Heart right ventricle (tissue), 16 donors: ENCODE measurements at regions of chr17 and their contacts with region 1.

Region 1: GRCh38 chr17:50177983-50178834 is 12.4 kb downstream of the SGCA start:
- DNase-seq: peak; percentile 82 to 89
- ATAC-seq: peak; percentile 78 to 91 (median 84)
- H3K4me3 ChIP-seq: peak overlapping the region in 6 of 10 donors; percentile 12 to 32 (median 27)
- H3K27ac ChIP-seq: peak overlapping the region; percentile 59 to 94 (median 84)
- H3K4me1 ChIP-seq: peaks cover 21 to 53% (median 38%) of the 10 kb centered on the region in 9 donors
- H3K27me3 ChIP-seq: no peaks in the 10 kb centered on the region
- CTCF ChIP-seq: peak; percentile 27 to 76 (median 51)

Region 2: DNA sequence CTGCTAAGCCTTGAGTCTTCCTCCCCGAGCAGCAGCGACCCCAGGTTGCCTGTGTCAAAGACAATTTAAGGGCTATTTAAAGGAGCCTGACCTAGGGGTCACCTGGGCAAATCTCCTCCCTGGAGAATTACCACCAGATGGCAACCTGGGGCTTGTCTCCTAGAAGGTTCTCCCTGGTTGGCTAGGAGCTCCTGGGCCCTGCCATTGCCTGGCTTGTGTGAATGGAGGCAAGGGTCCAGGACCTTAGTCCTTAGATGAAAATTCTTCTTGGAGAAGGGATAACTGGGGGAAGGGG is 279.1 kb before region 1 on chr17:
- intact Hi-C with region 1: no loop called
- DNase-seq: no peak
- ATAC-seq: no peak
- H3K4me3 ChIP-seq: no peak overlapping the region
- H3K27ac ChIP-seq: no peak overlapping the region
- H3K4me1 ChIP-seq: peaks cover 0 to 6% (median 2%) of the 10 kb centered on the region in 9 donors
- H3K27me3 ChIP-seq: peaks cover 0 to 77% (median 57%) of the 10 kb centered on the region in 7 donors
- CTCF ChIP-seq: peak in 1 of 9 donors; percentile 9

Region 3: DNA sequence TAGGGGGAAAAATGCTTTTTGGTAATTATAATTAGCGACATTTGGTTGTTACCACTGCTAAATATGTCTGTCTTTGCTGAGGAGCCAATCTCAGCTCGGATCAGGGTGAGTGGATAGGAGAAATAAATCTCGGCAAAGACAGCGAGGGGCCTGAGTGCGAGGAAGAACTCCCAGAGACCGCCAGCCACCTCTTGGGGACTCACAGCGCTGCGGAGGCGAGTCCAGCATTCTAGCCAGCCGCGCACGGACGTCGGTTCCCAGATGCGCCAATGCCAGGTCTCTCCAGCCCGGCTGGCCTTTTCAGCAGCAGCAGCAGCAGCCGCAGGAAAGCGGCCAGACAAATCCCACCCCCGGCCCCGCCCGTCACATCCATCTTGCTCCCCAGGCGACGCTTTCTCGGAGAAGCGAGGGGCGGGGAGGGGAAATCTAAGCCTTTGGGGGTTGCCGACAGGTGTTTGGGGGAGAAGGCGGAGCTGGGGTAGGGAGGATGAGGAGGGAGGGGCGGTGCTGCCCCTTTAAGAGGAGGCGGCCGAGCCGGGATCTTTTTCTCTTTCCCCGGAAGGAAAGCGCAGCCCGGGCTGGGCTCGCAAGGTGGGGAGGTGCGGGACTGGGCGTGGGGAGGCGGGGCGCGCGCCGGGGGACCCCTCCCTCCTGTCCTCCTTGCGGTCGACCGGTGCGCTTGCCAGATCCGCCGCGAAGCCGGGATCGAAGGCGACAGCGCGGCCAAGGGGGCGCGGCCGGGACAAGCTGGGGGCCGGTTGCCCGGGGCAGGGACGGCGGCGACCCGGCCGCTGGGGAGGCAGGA is 122.6 kb before region 1 on chr17 and contains the start of gene ITGA3:
- intact Hi-C with region 1: loop called in 1 of 10 experiments (anchors 1 kb)
- DNase-seq: peak; percentile 75 to 78
- ATAC-seq: peak; percentile 56 to 77 (median 72)
- H3K4me3 ChIP-seq: peak within 1 kb of the TSS; percentile 61 to 97 (median 80)
- H3K27ac ChIP-seq: peak within 1 kb of the TSS; percentile 57 to 97 (median 90)
- H3K4me1 ChIP-seq: peaks cover 27 to 85% (median 71%) of the 10 kb centered on the region in 9 donors
- H3K27me3 ChIP-seq: peaks cover 0 to 38% (median 0%) of the 10 kb centered on the region in 7 donors
- CTCF ChIP-seq: peak in 1 of 9 donors; percentile 2
- total RNA-seq, gene ITGA3: 12.5 to 44.2 (median 22.5) TPM

Region 4: DNA sequence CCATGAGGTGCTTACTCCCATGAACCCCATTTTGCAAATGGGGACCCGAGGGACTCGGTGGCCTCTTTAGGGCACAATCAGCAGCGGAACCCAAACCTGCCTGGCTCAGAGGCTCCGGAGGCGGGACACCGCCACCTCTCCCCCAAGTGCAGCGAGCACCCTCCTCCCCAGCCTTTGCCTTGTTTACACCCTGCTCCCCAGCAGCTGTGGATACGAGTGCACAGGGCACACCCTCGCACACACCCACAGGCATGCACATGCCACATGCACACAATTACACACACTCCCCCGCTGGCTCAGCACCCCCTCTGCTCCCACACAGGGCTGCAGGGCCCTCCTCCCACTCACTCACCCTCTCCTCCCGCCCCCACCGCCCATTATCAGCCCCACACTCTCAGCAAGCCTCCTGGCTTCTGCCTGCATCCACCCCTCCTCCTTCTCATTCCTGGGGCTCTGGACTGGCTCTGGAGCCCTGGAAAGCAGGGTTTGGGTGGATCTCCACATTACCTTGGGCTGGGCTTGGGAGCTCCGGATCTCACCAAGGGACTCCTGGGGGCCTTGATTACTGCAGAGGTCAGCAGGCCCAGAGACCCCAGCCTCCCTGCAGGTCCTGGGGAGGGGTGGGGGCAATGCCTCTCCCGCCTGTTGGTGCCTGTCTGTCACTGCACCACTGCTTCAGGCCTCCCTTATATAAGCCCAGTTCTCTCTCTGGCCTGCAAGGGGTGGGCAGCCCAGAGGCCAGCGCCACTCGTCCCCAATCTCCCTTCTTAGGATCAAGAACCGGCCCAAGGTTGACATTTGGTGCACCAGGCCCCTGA is 76.7 kb before region 1 on chr17:
- intact Hi-C with region 1: loop called in 1 of 10 experiments (anchors 5 kb)
- DNase-seq: peak; percentile 49 to 70
- ATAC-seq: peak; percentile 41 to 88 (median 73)
- H3K4me3 ChIP-seq: peak overlapping the region in 5 of 10 donors; percentile 5 to 29 (median 14)
- H3K27ac ChIP-seq: peak overlapping the region; percentile 74 to 97 (median 90)
- H3K4me1 ChIP-seq: peaks cover 19 to 74% (median 51%) of the 10 kb centered on the region in 9 donors
- H3K27me3 ChIP-seq: no peaks in the 10 kb centered on the region
- CTCF ChIP-seq: peak in 2 of 9 donors; percentile 2 to 12

Region 5: GRCh38 chr17:50129728-50130558 is 48.3 kb before region 1 on chr17 and contains the start of gene SAMD14:
- intact Hi-C with region 1: loop called in 2 of 10 experiments (anchors 5 kb)
- DNase-seq: peak in 1 of 2 donors; percentile 49
- ATAC-seq: peak in 6 of 8 donors; percentile 4 to 47 (median 28)
- H3K4me3 ChIP-seq: peak within 1 kb of the TSS; percentile 33 to 58 (median 55)
- H3K27ac ChIP-seq: peak within 1 kb of the TSS in 5 of 10 donors; percentile 17 to 52 (median 34)
- H3K4me1 ChIP-seq: peaks cover 14 to 70% (median 46%) of the 10 kb centered on the region in 9 donors
- H3K27me3 ChIP-seq: peaks cover 0 to 40% (median 0%) of the 10 kb centered on the region in 7 donors
- CTCF ChIP-seq: no peak
- total RNA-seq, gene SAMD14: 1.5 to 3.8 (median 1.9) TPM

Region 6: DNA sequence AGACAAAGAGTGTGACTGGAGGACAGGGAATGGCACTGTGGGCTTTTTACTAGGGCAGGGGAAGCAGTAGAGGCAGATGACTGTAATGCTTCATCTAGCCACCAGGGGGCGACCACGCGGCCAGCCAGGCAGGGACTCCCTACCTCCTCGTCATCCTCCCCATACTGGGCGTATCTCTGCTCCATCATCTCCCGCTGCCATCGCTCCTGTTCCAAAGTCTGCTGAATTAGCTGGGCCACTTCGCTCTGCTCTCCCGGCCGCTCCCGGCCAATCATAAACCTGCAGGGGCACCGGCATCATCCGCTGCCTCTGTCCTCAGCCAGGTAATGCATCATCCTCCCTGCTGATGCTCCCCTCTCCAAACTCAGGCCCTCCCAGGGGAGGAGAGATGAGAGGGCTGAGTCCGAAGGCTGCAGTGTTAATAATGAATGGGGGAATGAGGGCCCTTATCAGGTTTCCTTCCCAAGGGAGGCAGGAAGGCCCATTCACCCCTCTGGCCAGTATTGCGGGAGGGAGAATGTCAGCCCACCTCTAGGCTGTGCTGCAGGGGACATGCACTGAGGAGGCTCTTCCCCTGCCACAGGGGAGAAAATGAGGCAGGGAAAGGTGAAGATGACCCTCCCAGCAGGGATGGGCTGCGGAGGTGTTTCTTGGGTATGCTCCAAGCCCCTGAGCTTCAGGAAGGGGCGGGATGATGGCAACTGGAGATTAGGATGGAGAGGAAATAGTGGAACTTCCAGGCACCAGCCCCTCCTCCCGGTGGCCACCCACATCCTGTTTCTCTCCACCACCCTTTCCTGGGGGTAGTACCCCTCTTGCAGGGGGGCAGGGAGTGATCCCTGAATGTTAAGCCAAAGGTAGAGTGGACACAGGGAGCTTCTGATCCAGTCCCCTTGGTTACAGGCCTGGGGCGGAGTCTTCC is 38.0 kb before region 1 on chr17:
- intact Hi-C with region 1: loop called in 2 of 10 experiments (anchors 5 kb)
- DNase-seq: peak; percentile 81 to 82
- ATAC-seq: peak; percentile 71 to 87 (median 78)
- H3K4me3 ChIP-seq: peak overlapping the region in 3 of 10 donors; percentile 10 to 19 (median 11)
- H3K27ac ChIP-seq: peak overlapping the region; percentile 29 to 83 (median 72)
- H3K4me1 ChIP-seq: peaks cover 14 to 61% (median 43%) of the 10 kb centered on the region in 9 donors
- H3K27me3 ChIP-seq: no peaks in the 10 kb centered on the region
- CTCF ChIP-seq: peak; percentile 92 to 99 (median 97)

Region 7: DNA sequence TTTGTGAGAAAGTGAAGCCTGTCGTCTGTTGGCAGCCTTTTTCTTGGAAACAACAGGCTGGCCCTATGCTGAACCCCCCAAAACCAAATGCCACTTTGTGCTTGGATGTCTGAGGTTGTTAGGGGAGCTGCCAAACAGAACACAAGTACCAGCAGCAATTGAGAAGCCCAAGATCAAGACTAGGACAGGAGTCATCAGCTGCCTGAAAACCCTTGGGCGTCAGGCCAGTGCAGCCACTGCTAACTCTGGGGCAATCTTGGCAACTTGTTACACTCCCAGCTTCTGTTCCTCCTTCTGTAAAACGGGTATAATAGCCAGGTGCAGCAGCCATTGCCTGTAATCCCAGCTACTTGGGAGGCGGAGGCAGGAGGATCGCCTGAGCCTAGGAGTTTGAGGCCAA is 228.4 kb after region 1 on chr17:
- intact Hi-C with region 1: no loop called
- DNase-seq: no peak
- ATAC-seq: no peak
- H3K4me3 ChIP-seq: no peak overlapping the region
- H3K27ac ChIP-seq: no peak overlapping the region
- H3K4me1 ChIP-seq: no peaks in the 10 kb centered on the region
- H3K27me3 ChIP-seq: peaks cover 0 to 12% (median 0%) of the 10 kb centered on the region in 7 donors
- CTCF ChIP-seq: no peak